Right ventricle myocardium superior (tissue), 1 donor: ENCODE measurements at regions of chr7 and their contacts with region 1.

Region 1: GRCh38 chr7:128904381-128905197 is 5.9 kb downstream of the KCP start:
- DNase-seq: peak; percentile 30
- ATAC-seq: peak; percentile 66

Region 2: GRCh38 chr7:128791121-128791961 is 113.2 kb before region 1 on chr7:
- intact Hi-C with region 1: no loop called
- DNase-seq: peak; percentile 88
- ATAC-seq: peak; percentile 94

Region 3: DNA sequence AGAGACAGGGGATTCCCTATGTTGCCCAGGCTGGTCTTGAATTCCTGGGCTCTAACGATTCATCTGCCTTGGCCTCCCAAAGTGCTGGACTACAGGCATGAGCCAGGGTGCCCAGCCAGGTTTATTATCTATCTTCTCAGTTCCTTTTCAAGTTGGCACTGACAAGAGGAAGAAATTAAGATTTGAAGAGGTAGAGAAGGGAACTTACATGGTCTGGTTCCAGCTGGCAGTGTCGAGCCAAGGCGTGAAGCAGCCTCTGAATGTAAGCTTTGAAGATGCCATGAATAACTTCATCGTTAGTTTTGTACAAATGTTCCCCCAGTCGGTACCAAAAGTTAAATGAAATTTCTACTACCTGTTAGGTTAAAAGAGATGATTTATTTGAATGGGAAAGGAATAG is 92.6 kb after region 1 on chr7:
- intact Hi-C with region 1: no loop called
- DNase-seq: no peak
- ATAC-seq: no peak

Region 4: DNA sequence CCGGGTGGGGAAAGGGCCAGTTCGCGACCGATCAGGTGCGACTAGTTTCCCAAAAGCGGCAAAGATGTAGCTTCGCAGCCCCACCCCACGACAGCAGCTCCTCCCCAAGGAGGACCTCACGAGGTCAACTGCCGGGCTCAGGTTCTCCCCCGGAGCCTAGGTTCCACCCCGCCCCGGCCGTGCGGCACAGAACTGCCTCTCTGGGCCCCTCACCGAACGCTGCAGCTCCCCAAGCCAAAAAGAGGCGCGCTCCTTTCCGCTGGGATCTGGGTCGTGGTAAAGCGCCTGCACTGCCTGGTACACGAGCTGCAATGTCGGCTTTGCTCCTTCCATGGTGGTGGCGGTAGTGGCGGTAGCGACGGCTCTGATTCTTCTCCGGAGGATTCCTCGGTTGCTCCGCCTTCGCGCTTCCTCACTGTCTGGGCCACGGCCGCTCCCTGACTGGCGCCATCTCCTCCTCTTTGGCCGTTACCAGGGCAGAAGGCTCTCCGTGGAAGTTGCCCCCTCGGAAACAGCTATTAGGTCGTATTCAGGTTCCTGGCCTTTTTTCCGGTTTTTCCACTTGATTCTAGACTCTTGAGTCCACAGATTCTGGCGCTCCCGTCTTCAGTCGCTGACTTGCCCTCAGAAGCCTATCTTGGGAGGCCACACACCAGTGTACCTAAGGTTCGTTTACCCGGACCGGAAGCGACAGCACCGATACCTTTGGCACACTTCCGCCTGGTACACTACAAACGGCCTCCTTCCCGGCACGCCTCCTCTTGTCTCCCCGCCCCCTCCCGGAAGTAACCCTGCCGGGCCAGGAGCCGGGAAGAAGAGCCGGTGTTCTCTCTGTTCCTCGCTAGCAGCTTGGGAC is 150.1 kb after region 1 on chr7 and contains the start of gene TNPO3:
- intact Hi-C with region 1: no loop called
- DNase-seq: peak; percentile 95
- ATAC-seq: peak; percentile 99
- total RNA-seq, gene TNPO3: 32.8 TPM

Region 5: GRCh38 chr7:129091484-129092002 is 187.0 kb after region 1 on chr7:
- intact Hi-C with region 1: loop called (anchors 2 kb)
- DNase-seq: peak; percentile 83
- ATAC-seq: peak; percentile 83